AG04450 (cell line): ENCODE measurements at regions of chr1 and their contacts with region 1.

Region 1: GRCh38 chr1:156797212-156797871 is 19.3 kb downstream of the SH2D2A start:
- DNase-seq: peak; percentile 26
- H3K4me3 ChIP-seq: no peak overlapping the region
- H3K27ac ChIP-seq: no peak overlapping the region
- H3K27me3 ChIP-seq: no peaks in the 10 kb centered on the region
- CTCF ChIP-seq: peak; percentile 94

Region 2: DNA sequence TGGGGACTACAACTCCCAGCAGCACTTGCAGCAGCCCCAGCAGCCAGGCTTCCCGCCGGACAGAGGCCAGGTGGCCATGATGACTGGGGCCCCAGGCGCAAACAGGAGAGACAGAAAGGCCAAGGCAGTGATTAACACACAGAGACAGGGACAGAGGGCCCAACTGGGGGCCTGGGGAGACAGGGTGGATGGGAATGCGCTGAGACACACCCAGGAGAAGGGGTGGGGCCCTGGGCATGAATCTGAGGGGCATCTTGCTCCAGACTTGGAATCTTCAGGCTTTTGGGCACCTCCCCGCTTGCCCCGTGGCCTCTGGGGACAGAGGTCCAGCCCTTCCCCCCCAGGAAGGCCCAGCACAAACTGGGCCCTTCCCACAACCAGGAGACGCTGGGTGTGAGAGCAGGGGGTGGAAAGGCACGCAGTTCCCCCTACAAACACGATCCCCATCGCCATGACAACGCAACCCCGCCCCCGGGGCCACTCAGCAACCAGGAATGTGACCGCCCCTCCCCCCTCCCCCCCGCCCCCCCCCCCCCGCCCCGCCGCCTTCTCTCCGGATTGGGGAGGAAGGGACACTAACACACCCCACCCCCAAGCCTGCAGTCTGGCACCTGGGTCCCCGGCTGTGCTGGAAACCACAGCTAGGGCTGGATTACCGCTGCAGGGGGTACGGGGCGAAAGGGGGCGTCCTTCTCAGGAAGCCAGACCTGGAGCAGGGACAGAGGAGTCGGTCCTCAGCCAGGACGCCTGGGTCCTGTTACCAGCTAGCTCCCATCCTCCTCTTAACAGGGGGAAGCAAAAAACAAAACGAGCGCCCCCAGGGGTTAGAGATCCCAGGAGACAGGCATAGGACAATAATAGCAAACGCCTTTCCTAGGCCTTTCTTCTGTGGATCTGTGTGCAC is 50.4 kb before region 1 on chr1:
- CTCF ChIA-PET with region 1: interaction called, 13 read pairs
- POLR2A ChIA-PET with region 1: no interaction called
- DNase-seq: peak; percentile 76
- H3K4me3 ChIP-seq: peak overlapping the region; percentile 94
- H3K27ac ChIP-seq: peak overlapping the region; percentile 97
- H3K27me3 ChIP-seq: no peaks in the 10 kb centered on the region
- CTCF ChIP-seq: peak; percentile 38

Region 3: GRCh38 chr1:156781585-156782186 is 15.7 kb before region 1 on chr1:
- CTCF ChIA-PET with region 1: interaction called, 20 read pairs
- POLR2A ChIA-PET with region 1: no interaction called
- DNase-seq: no peak
- H3K4me3 ChIP-seq: no peak overlapping the region
- H3K27ac ChIP-seq: no peak overlapping the region
- H3K27me3 ChIP-seq: no peaks in the 10 kb centered on the region
- CTCF ChIP-seq: no peak

Region 4: GRCh38 chr1:156813750-156814570 is 16.6 kb after region 1 on chr1:
- CTCF ChIA-PET with region 1: interaction called, 17 read pairs
- POLR2A ChIA-PET with region 1: no interaction called
- DNase-seq: no peak
- H3K4me3 ChIP-seq: peak overlapping the region; percentile 27
- H3K27ac ChIP-seq: no peak overlapping the region
- H3K27me3 ChIP-seq: peaks cover 11% of the 10 kb centered on the region
- CTCF ChIP-seq: peak; percentile 49

Region 5: GRCh38 chr1:156860113-156860627 is 62.8 kb after region 1 on chr1:
- CTCF ChIA-PET with region 1: interaction called, 62 read pairs
- POLR2A ChIA-PET with region 1: no interaction called
- DNase-seq: no peak
- H3K4me3 ChIP-seq: peak overlapping the region; percentile 32
- H3K27ac ChIP-seq: no peak overlapping the region
- H3K27me3 ChIP-seq: peaks cover 81% of the 10 kb centered on the region
- CTCF ChIP-seq: peak; percentile 78

Region 6: GRCh38 chr1:156920233-156921052 is 123.1 kb after region 1 on chr1 and contains the start of gene LRRC71:
- CTCF ChIA-PET with region 1: interaction called, 10 read pairs
- POLR2A ChIA-PET with region 1: no interaction called
- DNase-seq: peak; percentile 29
- H3K4me3 ChIP-seq: peak within 1 kb of the TSS; percentile 45
- H3K27ac ChIP-seq: no peak within 1 kb of the TSS
- H3K27me3 ChIP-seq: peaks cover 44% of the 10 kb centered on the region
- CTCF ChIP-seq: peak; percentile 86
- polyA plus RNA-seq, gene LRRC71: not detected in 2 replicates

Region 7: DNA sequence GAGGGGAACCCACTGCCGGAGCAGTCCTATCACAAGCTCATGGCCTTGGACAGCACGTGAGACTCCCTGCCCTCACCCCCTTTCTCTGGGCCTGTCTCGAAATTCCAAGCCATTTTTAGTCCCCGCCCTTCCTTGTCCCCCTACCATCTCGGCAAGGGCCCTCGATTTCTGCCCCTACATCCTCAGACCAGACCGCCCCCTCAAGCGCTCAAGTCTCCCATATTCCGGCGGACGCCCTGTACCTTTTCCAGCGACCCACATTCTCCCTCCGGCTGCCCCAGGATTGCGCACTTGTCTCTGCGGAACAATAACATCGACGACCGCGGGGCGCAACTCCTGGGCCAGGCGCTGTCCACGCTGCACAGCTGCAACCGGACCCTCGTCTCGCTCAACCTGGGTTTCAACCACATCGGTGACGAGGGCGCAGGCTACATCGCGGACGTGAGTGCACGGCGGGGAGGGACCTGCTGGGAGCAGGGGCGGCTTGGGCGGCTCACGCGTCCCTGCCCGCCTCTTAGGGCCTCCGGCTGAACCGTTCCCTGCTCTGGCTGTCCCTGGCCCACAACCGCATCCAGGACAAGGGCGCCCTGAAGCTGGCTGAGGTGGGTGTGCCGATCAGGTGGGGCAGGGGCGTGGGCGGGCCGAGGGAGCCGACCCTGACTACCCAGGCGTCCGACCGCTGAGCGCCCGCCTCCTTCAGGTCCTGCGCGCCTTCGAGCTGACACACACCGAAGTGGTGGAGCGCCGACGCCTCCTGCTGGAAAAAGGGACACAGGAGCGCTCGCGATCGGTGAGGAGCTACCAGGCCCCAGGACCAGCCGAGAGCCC is 130.1 kb after region 1 on chr1:
- CTCF ChIA-PET with region 1: interaction called, 17 read pairs
- POLR2A ChIA-PET with region 1: no interaction called
- DNase-seq: peak; percentile 26
- H3K4me3 ChIP-seq: peak overlapping the region; percentile 50
- H3K27ac ChIP-seq: no peak overlapping the region
- H3K27me3 ChIP-seq: peaks cover 47% of the 10 kb centered on the region
- CTCF ChIP-seq: peak; percentile 81

Region 8: GRCh38 chr1:157113106-157113505 is 315.8 kb after region 1 on chr1:
- CTCF ChIA-PET with region 1: no interaction called
- POLR2A ChIA-PET with region 1: no interaction called
- DNase-seq: no peak
- H3K4me3 ChIP-seq: no peak overlapping the region
- H3K27ac ChIP-seq: no peak overlapping the region
- H3K27me3 ChIP-seq: peaks cover 12% of the 10 kb centered on the region
- CTCF ChIP-seq: no peak